SK-N-SH (cell line): ENCODE measurements at regions of chr19 and their contacts with region 1.

Region 1: GRCh38 chr19:14059093-14059480 is 2.8 kb downstream of the PALM3 start:
- DNase-seq: peak; percentile 66
- H3K4me3 ChIP-seq: peak overlapping the region in 1 of 2 experiments; percentile 64; a peak in 1 of 4 replicates
- H3K27ac ChIP-seq: no peak overlapping the region
- H3K4me1 ChIP-seq: peaks cover 6 to 10% of the 10 kb centered on the region in 2 experiments; a peak in 2 of 4 replicates
- H3K27me3 ChIP-seq: no peaks in the 10 kb centered on the region
- CTCF ChIP-seq: peak; percentile 76
- EP300 ChIP-seq: no peak
- RAD21 ChIP-seq: no peak

Region 2: GRCh38 chr19:13774217-13775191 is 284.6 kb before region 1 on chr19 and contains the start of gene C19orf53:
- CTCF ChIA-PET with region 1: no interaction called
- POLR2A ChIA-PET with region 1: no interaction called
- DNase-seq: peak; percentile 93
- H3K4me3 ChIP-seq: peak within 1 kb of the TSS; percentile 74 to 94
- H3K27ac ChIP-seq: peak within 1 kb of the TSS; percentile 83 to 91
- H3K4me1 ChIP-seq: peaks cover 6 to 8% of the 10 kb centered on the region in 2 experiments; a peak in 2 of 4 replicates
- H3K27me3 ChIP-seq: no peaks in the 10 kb centered on the region
- CTCF ChIP-seq: no peak
- EP300 ChIP-seq: no peak
- RAD21 ChIP-seq: no peak
- polyA plus RNA-seq, gene C19orf53: 470 and 554 TPM in 2 replicates

Region 3: GRCh38 chr19:13873741-13874516 is 185.2 kb before region 1 on chr19:
- CTCF ChIA-PET with region 1: interaction called, 36 read pairs
- POLR2A ChIA-PET with region 1: no interaction called
- DNase-seq: peak; percentile 49
- H3K4me3 ChIP-seq: no peak overlapping the region
- H3K27ac ChIP-seq: no peak overlapping the region; a peak in 1 of 4 replicates
- H3K4me1 ChIP-seq: peaks cover 0 to 11% of the 10 kb centered on the region in 2 experiments; a peak in 1 of 4 replicates
- H3K27me3 ChIP-seq: no peaks in the 10 kb centered on the region
- CTCF ChIP-seq: no peak
- EP300 ChIP-seq: no peak
- RAD21 ChIP-seq: no peak

Region 4: GRCh38 chr19:14015524-14016035 is 43.5 kb before region 1 on chr19:
- CTCF ChIA-PET with region 1: no interaction called
- POLR2A ChIA-PET with region 1: no interaction called
- DNase-seq: no peak
- H3K4me3 ChIP-seq: no peak overlapping the region
- H3K27ac ChIP-seq: no peak overlapping the region
- H3K4me1 ChIP-seq: no peaks in the 10 kb centered on the region
- H3K27me3 ChIP-seq: no peaks in the 10 kb centered on the region
- CTCF ChIP-seq: no peak
- EP300 ChIP-seq: no peak
- RAD21 ChIP-seq: no peak

Region 5: DNA sequence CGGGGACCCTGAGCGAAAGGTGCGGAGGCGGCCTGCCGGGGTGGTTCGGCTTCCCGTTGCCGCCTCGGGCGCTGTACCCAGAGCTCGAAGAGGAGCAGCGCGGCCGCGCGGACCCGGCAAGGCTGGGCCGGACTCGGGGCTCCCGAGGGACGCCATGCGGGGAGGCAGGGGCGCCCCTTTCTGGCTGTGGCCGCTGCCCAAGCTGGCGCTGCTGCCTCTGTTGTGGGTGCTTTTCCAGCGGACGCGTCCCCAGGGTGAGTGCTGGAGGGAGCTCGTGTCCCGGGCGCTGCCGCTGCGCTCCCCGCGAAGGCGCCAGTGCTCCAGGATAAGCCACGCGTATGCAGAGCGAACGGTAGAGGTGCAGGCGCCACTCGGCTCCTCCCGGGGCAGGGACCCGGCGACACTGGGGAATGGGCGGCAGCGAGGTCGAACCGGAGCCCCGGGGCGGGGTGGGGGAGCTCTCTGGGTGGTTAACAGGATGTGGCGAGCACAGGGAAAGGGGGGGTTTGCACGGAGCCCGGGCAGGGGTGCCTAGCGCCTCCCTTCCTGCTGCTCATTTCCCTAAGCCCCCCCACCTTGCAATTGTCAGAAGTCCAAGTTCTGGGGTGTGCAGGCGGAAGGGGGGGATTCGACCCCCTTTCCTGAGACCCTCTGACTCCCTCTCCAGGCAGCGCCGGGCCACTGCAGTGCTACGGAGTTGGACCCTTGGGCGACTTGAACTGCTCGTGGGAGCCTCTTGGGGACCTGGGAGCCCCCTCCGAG is 27.2 kb before region 1 on chr19 and contains the start of gene IL27RA:
- CTCF ChIA-PET with region 1: interaction called, 22 read pairs
- POLR2A ChIA-PET with region 1: no interaction called
- DNase-seq: peak; percentile 87
- H3K4me3 ChIP-seq: peak within 1 kb of the TSS; percentile 60 to 80
- H3K27ac ChIP-seq: peak within 1 kb of the TSS in 1 of 2 experiments; percentile 40; a peak in 3 of 4 replicates
- H3K4me1 ChIP-seq: peaks cover 0 to 3% of the 10 kb centered on the region in 2 experiments; a peak in 1 of 4 replicates
- H3K27me3 ChIP-seq: no peaks in the 10 kb centered on the region
- CTCF ChIP-seq: peak; percentile 70
- EP300 ChIP-seq: no peak
- RAD21 ChIP-seq: peak; percentile 61
- polyA plus RNA-seq, gene IL27RA: 9.3 TPM in 2 replicates

Region 6: GRCh38 chr19:14039181-14039580 is 19.9 kb before region 1 on chr19:
- CTCF ChIA-PET with region 1: interaction called, 11 read pairs
- POLR2A ChIA-PET with region 1: no interaction called
- DNase-seq: no peak
- H3K4me3 ChIP-seq: no peak overlapping the region
- H3K27ac ChIP-seq: no peak overlapping the region
- H3K4me1 ChIP-seq: no peaks in the 10 kb centered on the region
- H3K27me3 ChIP-seq: no peaks in the 10 kb centered on the region
- CTCF ChIP-seq: no peak
- EP300 ChIP-seq: no peak
- RAD21 ChIP-seq: no peak

Region 7: DNA sequence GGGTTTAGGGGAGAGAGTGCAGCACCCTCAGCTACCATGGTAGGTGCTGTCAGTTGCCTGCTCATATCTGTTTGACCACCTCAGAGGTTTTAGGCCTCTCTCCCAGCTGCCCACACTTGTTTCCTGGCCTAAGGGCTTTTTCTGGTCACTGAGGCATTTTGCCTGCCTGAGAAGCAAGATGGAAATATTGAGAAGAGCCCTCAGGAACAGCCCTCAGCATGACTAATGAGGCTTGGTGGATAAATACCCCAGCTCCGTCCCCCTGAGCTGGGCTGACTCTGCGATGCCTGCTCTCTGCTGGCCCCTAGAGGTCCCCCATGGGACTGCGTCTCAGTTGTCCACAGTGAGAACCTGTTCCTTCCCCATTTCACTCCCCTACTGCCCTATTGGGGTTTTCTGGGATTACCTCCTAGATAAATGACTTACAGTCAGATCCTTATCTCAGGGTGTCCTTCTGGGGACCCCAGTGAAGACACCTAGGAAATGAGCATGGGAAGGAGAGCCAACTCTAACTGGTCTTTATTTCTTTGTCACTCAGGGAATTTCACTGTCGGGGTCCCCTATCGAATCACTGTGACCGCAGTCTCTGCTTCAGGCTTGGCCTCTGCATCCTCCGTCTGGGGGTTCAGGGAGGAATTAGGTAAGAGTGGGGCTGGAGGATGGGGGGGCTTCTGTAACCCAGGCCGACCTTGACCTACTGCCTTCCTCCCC is 10.5 kb before region 1 on chr19:
- CTCF ChIA-PET with region 1: interaction called, 34 read pairs
- POLR2A ChIA-PET with region 1: interaction called, 3 read pairs
- DNase-seq: peak; percentile 83
- H3K4me3 ChIP-seq: no peak overlapping the region
- H3K27ac ChIP-seq: no peak overlapping the region
- H3K4me1 ChIP-seq: no peaks in the 10 kb centered on the region
- H3K27me3 ChIP-seq: no peaks in the 10 kb centered on the region
- CTCF ChIP-seq: peak; percentile 79
- EP300 ChIP-seq: no peak
- RAD21 ChIP-seq: peak; percentile 52

Region 8: DNA sequence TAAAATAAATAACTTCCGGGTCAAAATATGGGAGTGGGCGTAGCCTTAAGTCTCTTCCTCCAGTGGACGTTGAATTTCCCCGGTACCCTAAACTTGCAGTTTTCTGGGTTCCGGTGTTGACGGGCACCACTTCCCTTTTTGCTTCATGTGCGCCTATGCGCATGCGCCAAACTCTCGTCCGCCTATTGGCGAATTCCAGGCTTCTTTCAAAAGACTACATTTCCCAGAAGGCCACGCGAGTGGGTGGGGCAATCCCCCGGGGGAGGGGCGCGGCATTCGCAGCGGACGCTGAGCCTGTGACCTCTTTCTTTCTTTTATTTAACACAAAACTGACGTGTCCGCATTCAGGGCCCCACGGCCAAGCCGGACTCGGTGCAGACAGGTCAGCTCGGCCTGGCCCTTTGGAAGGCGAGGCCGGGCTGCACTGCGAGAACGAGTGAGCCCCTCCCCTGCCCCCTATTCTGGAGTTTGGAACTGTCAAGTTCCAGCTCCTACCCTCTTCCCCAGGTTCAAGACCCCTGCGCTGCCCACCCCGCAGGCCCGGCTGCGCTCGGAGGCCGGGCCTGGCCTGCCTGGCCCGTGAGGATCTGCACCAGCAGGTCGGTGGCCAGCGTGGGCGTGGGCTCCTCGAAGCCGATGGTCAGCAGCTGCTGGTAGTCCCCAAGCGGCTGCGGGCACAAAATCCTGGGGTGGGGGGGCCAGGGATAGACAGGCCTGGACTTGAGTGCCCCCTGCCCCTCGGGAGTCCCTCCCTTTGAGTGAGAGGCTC is 22.4 kb after region 1 on chr19:
- CTCF ChIA-PET with region 1: interaction called, 11 read pairs
- POLR2A ChIA-PET with region 1: no interaction called
- DNase-seq: peak; percentile 95
- H3K4me3 ChIP-seq: peak overlapping the region; percentile 68 to 95
- H3K27ac ChIP-seq: peak overlapping the region; percentile 51 to 70; a peak in 3 of 4 replicates
- H3K4me1 ChIP-seq: peaks cover 3 to 12% of the 10 kb centered on the region in 2 experiments; a peak in 2 of 4 replicates
- H3K27me3 ChIP-seq: no peaks in the 10 kb centered on the region
- CTCF ChIP-seq: 0 out of 2 replicates have a peak, but pooled peaks have one; percentile 7
- EP300 ChIP-seq: no peak
- RAD21 ChIP-seq: no peak